SK-N-SH (cell line): ENCODE measurements at regions of chr21 and their contacts with region 1.

Region 1: GRCh38 chr21:40385892-40386599 is 460.9 kb downstream of the DSCAM start:
- DNase-seq: peak; percentile 78
- H3K4me3 ChIP-seq: peak overlapping the region in 1 of 2 experiments; percentile 10; a peak in 1 of 4 replicates
- H3K27ac ChIP-seq: no peak overlapping the region
- H3K4me1 ChIP-seq: no peaks in the 10 kb centered on the region; a peak in 1 of 4 replicates
- H3K27me3 ChIP-seq: no peaks in the 10 kb centered on the region
- CTCF ChIP-seq: peak; percentile 42
- EP300 ChIP-seq: no peak
- RAD21 ChIP-seq: peak; percentile 83

Region 2: GRCh38 chr21:40143822-40144525 is 242.1 kb before region 1 on chr21:
- CTCF ChIA-PET with region 1: interaction called, 61 read pairs
- POLR2A ChIA-PET with region 1: no interaction called
- DNase-seq: peak; percentile 69
- H3K4me3 ChIP-seq: no peak overlapping the region; a peak in 1 of 4 replicates
- H3K27ac ChIP-seq: no peak overlapping the region
- H3K4me1 ChIP-seq: peaks cover 0 to 3% of the 10 kb centered on the region in 2 experiments; a peak in 1 of 4 replicates
- H3K27me3 ChIP-seq: no peaks in the 10 kb centered on the region
- CTCF ChIP-seq: peak; percentile 68
- EP300 ChIP-seq: no peak
- RAD21 ChIP-seq: peak; percentile 90

Region 3: GRCh38 chr21:40227096-40227495 is 158.9 kb before region 1 on chr21:
- CTCF ChIA-PET with region 1: no interaction called
- POLR2A ChIA-PET with region 1: no interaction called
- DNase-seq: no peak
- H3K4me3 ChIP-seq: no peak overlapping the region
- H3K27ac ChIP-seq: no peak overlapping the region
- H3K4me1 ChIP-seq: no peaks in the 10 kb centered on the region
- H3K27me3 ChIP-seq: no peaks in the 10 kb centered on the region
- CTCF ChIP-seq: no peak
- EP300 ChIP-seq: no peak
- RAD21 ChIP-seq: no peak

Region 4: GRCh38 chr21:40254540-40255465 is 131.2 kb before region 1 on chr21:
- CTCF ChIA-PET with region 1: interaction called, 20 read pairs
- POLR2A ChIA-PET with region 1: no interaction called
- DNase-seq: peak; percentile 60
- H3K4me3 ChIP-seq: no peak overlapping the region
- H3K27ac ChIP-seq: peak overlapping the region in 1 of 2 experiments; percentile 92; a peak in 2 of 4 replicates
- H3K4me1 ChIP-seq: peaks cover 0 to 31% of the 10 kb centered on the region in 2 experiments; a peak in 2 of 4 replicates
- H3K27me3 ChIP-seq: no peaks in the 10 kb centered on the region
- CTCF ChIP-seq: no peak
- EP300 ChIP-seq: peak in 1 of 2 experiments; percentile 97; a peak in 2 of 4 replicates
- RAD21 ChIP-seq: peak; percentile 45

Region 5: GRCh38 chr21:40356649-40357048 is 29.4 kb before region 1 on chr21:
- CTCF ChIA-PET with region 1: interaction called, 11 read pairs
- POLR2A ChIA-PET with region 1: no interaction called
- DNase-seq: no peak
- H3K4me3 ChIP-seq: no peak overlapping the region
- H3K27ac ChIP-seq: no peak overlapping the region
- H3K4me1 ChIP-seq: no peaks in the 10 kb centered on the region
- H3K27me3 ChIP-seq: no peaks in the 10 kb centered on the region
- CTCF ChIP-seq: no peak
- EP300 ChIP-seq: no peak
- RAD21 ChIP-seq: no peak

Region 6: DNA sequence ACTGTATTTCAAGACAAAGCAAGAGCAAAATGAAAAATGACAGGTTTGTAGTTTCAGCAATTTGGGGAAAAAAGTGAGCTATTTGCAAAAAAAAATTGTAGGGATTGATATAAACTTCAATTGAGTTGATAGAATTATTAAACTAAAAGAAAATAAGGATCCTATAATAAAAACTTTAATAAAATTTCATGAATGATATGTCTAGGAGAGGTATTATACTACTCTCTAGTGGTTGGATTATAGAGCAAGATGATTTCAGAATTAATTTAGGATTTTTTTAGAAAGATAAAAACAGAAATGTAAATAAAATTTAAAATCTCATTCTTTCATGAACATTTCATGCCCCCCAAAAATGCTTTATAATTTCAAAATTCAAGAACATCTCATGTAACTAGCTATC is 30.5 kb after region 1 on chr21:
- CTCF ChIA-PET with region 1: interaction called, 15 read pairs
- POLR2A ChIA-PET with region 1: no interaction called
- DNase-seq: no peak
- H3K4me3 ChIP-seq: no peak overlapping the region
- H3K27ac ChIP-seq: no peak overlapping the region
- H3K4me1 ChIP-seq: no peaks in the 10 kb centered on the region
- H3K27me3 ChIP-seq: no peaks in the 10 kb centered on the region
- CTCF ChIP-seq: no peak
- EP300 ChIP-seq: no peak
- RAD21 ChIP-seq: no peak

Region 7: DNA sequence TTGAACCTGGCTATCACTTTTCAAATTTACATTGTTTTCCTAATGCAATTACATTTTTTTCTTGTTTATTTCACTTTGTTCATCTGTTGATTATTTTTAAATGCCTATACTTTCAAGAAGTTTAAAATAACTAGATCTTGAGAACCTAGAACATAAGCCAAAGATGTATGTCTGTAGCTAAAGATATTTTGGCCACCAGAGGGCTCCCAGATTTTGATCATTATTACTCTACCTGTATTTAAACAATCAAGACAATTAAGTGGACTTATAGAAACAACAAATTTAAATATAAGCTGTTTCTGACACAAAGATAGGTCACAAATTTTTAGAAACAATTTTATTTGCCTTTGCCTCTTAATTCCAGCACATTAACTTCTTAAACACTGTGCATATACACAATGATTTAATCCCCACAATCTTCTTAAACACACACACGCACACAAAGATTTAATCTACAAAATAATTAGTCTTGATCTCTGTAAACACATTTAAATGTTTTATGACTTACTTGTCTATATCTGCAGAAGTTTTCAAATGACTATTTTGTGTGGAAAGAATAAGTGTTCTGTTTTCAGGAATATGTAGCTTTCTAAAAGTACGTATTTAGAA is 81.0 kb after region 1 on chr21:
- CTCF ChIA-PET with region 1: interaction called, 14 read pairs
- POLR2A ChIA-PET with region 1: no interaction called
- DNase-seq: peak; percentile 17
- H3K4me3 ChIP-seq: no peak overlapping the region; a peak in 1 of 4 replicates
- H3K27ac ChIP-seq: no peak overlapping the region
- H3K4me1 ChIP-seq: no peaks in the 10 kb centered on the region; a peak in 1 of 4 replicates
- H3K27me3 ChIP-seq: no peaks in the 10 kb centered on the region
- CTCF ChIP-seq: 0 out of 2 replicates have a peak, but pooled peaks have one; percentile 27
- EP300 ChIP-seq: no peak
- RAD21 ChIP-seq: peak; percentile 58